ENCODE measurements at regions of chr3 and their contacts with region 1.

Region 1: GRCh38 chr3:127455541-127456450 is 134.7 kb downstream of the TPRA1 start:
- DNase-seq: peak; percentile 54
- H3K4me3 ChIP-seq: no peak overlapping the region
- H3K27ac ChIP-seq: no peak overlapping the region
- H3K4me1 ChIP-seq: peaks cover 13% of the 10 kb centered on the region
- H3K27me3 ChIP-seq: peaks cover 18 to 34% of the 10 kb centered on the region in 2 experiments
- CTCF ChIP-seq: peak; percentile 84 to 94
- POLR2A ChIP-seq: no peak

Region 2: GRCh38 chr3:126522363-126522788 is 933.4 kb before region 1 on chr3:
- CTCF ChIA-PET with region 1: interaction called, 51 read pairs
- POLR2A ChIA-PET with region 1: no interaction called
- dilution Hi-C with region 1: no loop called
- intact Hi-C with region 1: loop called (anchors 1 kb)
- DNase-seq: peak; percentile 43
- H3K4me3 ChIP-seq: no peak overlapping the region
- H3K27ac ChIP-seq: no peak overlapping the region
- H3K4me1 ChIP-seq: no peaks in the 10 kb centered on the region
- H3K27me3 ChIP-seq: peaks cover 13 to 17% of the 10 kb centered on the region in 2 experiments
- CTCF ChIP-seq: peak; percentile 67 to 78
- POLR2A ChIP-seq: no peak

Region 3: GRCh38 chr3:126752303-126752842 is 703.4 kb before region 1 on chr3:
- CTCF ChIA-PET with region 1: interaction called, 41 read pairs
- POLR2A ChIA-PET with region 1: no interaction called
- dilution Hi-C with region 1: no loop called
- intact Hi-C with region 1: loop called (anchors 1 kb)
- DNase-seq: peak; percentile 73
- H3K4me3 ChIP-seq: no peak overlapping the region
- H3K27ac ChIP-seq: no peak overlapping the region
- H3K4me1 ChIP-seq: no peaks in the 10 kb centered on the region
- H3K27me3 ChIP-seq: no peaks in the 10 kb centered on the region
- CTCF ChIP-seq: peak; percentile 82 to 92
- POLR2A ChIP-seq: no peak

Region 4: GRCh38 chr3:126982471-126983175 is 473.2 kb before region 1 on chr3 and contains the start of gene PLXNA1:
- CTCF ChIA-PET with region 1: no interaction called
- POLR2A ChIA-PET with region 1: no interaction called
- dilution Hi-C with region 1: no loop called
- intact Hi-C with region 1: loop called (anchors 1 kb)
- DNase-seq: peak; percentile 81
- H3K4me3 ChIP-seq: peak within 1 kb of the TSS; percentile 34 to 51 (median 51)
- H3K27ac ChIP-seq: peak within 1 kb of the TSS; percentile 48
- H3K4me1 ChIP-seq: peaks cover 13% of the 10 kb centered on the region
- H3K27me3 ChIP-seq: peaks cover 3 to 29% of the 10 kb centered on the region in 2 experiments
- CTCF ChIP-seq: peak; percentile 95 to 96
- POLR2A ChIP-seq: no peak
- total RNA-seq, gene PLXNA1: 18.4 and 18.5 TPM in 2 replicates

Region 5: GRCh38 chr3:127254730-127255129 is 201.1 kb before region 1 on chr3:
- CTCF ChIA-PET with region 1: interaction called, 13 read pairs
- POLR2A ChIA-PET with region 1: no interaction called
- dilution Hi-C with region 1: no loop called
- intact Hi-C with region 1: loop called (anchors 1 kb)
- DNase-seq: no peak
- H3K4me3 ChIP-seq: no peak overlapping the region
- H3K27ac ChIP-seq: no peak overlapping the region
- H3K4me1 ChIP-seq: no peaks in the 10 kb centered on the region
- H3K27me3 ChIP-seq: no peaks in the 10 kb centered on the region
- CTCF ChIP-seq: peak in 1 of 2 donors; percentile 29
- POLR2A ChIP-seq: no peak

Region 6: DNA sequence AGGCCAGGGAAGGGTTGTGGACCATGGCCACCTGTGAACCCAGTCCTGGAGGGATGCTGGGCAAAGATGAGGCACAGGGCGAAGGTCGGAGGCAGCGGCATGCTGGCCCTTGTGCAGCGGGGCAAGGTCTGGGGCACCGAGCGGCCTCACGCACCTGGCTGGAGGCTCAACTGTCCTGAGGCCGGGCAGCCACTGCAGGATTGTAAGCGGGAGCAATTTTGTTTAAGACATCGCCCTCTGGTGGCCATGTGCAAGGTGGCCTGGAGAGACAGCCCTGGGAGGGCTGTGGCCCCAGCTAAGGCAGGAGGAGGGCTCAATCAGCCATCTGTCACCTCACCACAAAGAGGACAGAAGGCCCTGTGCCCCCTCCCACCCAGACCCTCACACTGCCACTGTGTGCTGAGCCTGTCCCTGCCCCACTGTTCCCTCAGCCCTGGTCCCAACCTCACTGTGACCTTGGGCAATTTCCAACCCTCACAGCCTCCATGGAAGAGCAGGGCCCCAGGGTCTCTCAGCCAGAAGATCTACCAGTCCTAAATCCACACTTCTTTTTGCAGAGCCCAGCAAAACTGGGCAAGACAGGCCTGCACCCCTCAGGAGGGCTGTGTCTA is 88.5 kb after region 1 on chr3:
- CTCF ChIA-PET with region 1: interaction called, 7 read pairs
- POLR2A ChIA-PET with region 1: no interaction called
- dilution Hi-C with region 1: no loop called
- intact Hi-C with region 1: loop called (anchors 1 kb)
- DNase-seq: peak; percentile 47
- H3K4me3 ChIP-seq: no peak overlapping the region
- H3K27ac ChIP-seq: no peak overlapping the region
- H3K4me1 ChIP-seq: peaks cover 4% of the 10 kb centered on the region
- H3K27me3 ChIP-seq: no peaks in the 10 kb centered on the region
- CTCF ChIP-seq: peak; percentile 80 to 89
- POLR2A ChIP-seq: no peak

Region 7: GRCh38 chr3:127612966-127613365 is 157.2 kb after region 1 on chr3:
- CTCF ChIA-PET with region 1: no interaction called
- POLR2A ChIA-PET with region 1: no interaction called
- dilution Hi-C with region 1: no loop called
- intact Hi-C with region 1: no loop called
- DNase-seq: peak; percentile 78
- H3K4me3 ChIP-seq: no peak overlapping the region
- H3K27ac ChIP-seq: peak overlapping the region; percentile 26
- H3K4me1 ChIP-seq: peaks cover 13% of the 10 kb centered on the region
- H3K27me3 ChIP-seq: no peaks in the 10 kb centered on the region
- CTCF ChIP-seq: no peak
- POLR2A ChIP-seq: no peak